ENCODE measurements at regions of chr7 and their contacts with region 1.

Region 1: DNA sequence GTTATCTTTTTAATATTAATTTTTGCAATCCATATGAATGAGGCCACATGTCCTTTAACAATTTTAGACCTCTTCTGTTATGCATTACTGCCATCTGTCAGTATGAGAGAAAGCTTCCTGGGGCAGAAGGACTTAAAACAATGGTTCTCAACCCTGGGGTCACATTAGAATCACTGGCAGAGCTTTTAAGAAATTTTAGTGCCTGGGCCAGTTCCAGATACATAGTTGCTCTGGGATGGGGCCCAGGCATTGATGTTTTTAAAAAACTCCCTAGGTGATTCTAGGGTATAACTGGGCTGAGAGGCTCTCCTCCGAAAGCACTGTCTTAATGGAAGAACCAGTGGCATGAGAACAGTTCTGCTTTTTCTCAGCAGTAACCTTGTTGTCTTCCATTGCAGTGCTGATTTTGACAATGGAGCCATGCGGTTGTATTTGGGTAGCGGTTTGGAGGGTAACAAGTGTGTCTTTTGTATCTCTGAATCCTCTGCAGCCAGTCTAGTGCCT is 226.9 kb downstream of the AUTS2 start:
- DNase-seq: no peak
- H3K4me3 ChIP-seq: no peak overlapping the region
- H3K4me3 Mint-ChIP-seq: no peak overlapping the region
- H3K27ac Mint-ChIP-seq: no peak overlapping the region
- H3K4me1 ChIP-seq: no peaks in the 10 kb centered on the region
- H3K4me1 Mint-ChIP-seq: no peaks in the 10 kb centered on the region
- H3K27me3 ChIP-seq: no peaks in the 10 kb centered on the region
- H3K27me3 Mint-ChIP-seq: peaks cover 3% of the 10 kb centered on the region
- CTCF ChIP-seq: no peak

Region 2: DNA sequence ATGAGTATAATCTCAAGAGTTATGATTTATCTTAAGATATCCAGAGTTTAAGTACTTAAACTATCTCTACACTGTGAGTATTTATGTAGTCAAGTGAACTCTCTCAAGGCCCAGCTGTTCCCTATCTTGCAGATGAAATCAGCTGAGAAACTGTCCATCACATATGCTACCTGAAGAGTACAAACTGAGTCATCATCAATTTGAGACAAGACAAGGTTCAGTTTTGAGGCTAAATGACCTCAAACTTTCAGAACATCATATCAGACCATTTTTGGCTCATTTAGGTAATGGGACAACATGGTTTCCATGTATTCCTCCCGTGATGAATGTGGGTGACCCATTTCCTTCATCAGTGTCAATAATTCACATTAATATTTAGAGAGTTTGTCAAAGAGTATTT is 280.0 kb before region 1 on chr7:
- CTCF ChIA-PET with region 1: no interaction called
- POLR2A ChIA-PET with region 1: no interaction called
- intact Hi-C with region 1: loop called (anchors 10 kb)
- DNase-seq: no peak
- H3K4me3 ChIP-seq: no peak overlapping the region
- H3K4me3 Mint-ChIP-seq: no peak overlapping the region
- H3K27ac Mint-ChIP-seq: no peak overlapping the region
- H3K4me1 ChIP-seq: no peaks in the 10 kb centered on the region
- H3K4me1 Mint-ChIP-seq: no peaks in the 10 kb centered on the region
- H3K27me3 ChIP-seq: no peaks in the 10 kb centered on the region
- H3K27me3 Mint-ChIP-seq: peaks cover 2% of the 10 kb centered on the region
- CTCF ChIP-seq: no peak

Region 3: DNA sequence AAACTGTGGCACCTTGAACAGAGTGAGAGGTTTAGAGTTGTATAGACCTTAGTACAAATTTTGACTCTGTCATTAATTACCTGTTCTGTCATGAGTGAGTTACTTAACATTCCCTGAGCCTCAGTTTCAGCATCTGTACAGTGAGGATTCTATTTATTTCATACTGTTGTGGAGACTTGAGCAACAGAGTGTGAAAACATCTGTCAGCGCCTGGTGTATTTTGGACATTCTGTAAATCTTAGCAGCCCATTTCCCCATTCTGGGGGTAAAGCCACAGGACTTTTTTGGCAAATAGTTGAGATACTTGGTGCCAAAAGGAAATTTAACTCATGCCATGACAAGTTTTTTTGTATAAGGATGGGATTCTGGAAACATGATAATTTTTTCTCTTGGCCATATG is 132.1 kb before region 1 on chr7:
- CTCF ChIA-PET with region 1: no interaction called
- POLR2A ChIA-PET with region 1: no interaction called
- intact Hi-C with region 1: no loop called
- DNase-seq: no peak
- H3K4me3 ChIP-seq: no peak overlapping the region
- H3K4me3 Mint-ChIP-seq: no peak overlapping the region
- H3K27ac Mint-ChIP-seq: no peak overlapping the region
- H3K4me1 ChIP-seq: no peaks in the 10 kb centered on the region
- H3K4me1 Mint-ChIP-seq: no peaks in the 10 kb centered on the region
- H3K27me3 ChIP-seq: no peaks in the 10 kb centered on the region
- H3K27me3 Mint-ChIP-seq: peaks cover 5% of the 10 kb centered on the region
- CTCF ChIP-seq: no peak

Measured in Caco-2 (cell line).